SK-N-SH (cell line): ENCODE measurements at regions of chr4 and their contacts with region 1.

Region 1: DNA sequence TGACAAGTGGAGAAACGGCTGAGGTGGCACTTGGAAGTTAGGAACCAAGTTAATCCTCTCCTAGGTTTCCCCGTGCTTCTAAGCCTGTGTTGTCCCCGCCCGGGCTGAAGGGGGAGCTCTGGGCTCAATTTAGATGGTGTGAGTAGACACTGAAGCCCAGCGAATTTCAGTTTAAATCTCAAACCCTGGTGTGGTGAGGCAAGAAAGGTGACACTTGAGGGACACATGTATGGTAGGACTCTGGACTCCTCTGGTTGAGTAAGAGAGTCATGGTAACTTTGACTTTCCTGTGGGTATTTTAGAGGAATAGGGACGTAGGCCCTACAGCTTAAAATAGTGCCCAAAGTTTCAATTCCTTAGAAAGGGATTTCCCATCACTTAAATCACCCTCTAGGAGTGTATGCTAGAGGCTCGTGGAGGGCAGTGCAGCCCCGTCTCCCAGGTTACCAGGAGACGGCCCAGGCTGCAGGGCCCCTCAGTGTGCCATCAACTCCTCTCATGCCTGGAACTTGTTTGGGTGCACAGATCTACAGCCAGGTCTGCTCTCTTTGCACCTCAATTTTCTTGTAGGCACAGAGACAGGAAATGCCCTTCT is 24.0 kb downstream of the HAND2 start:
- DNase-seq: peak; percentile 77
- H3K4me3 ChIP-seq: peak overlapping the region in 1 of 2 experiments; percentile 66; a peak in 2 of 4 replicates
- H3K27ac ChIP-seq: peak overlapping the region; percentile 82 to 99
- H3K4me1 ChIP-seq: peaks cover 8 to 51% of the 10 kb centered on the region in 2 experiments; a peak in 2 of 4 replicates
- H3K27me3 ChIP-seq: no peaks in the 10 kb centered on the region
- CTCF ChIP-seq: peak; percentile 84
- EP300 ChIP-seq: no peak
- RAD21 ChIP-seq: peak; percentile 83

Region 2: GRCh38 chr4:173318648-173319211 is 187.3 kb before region 1 on chr4:
- CTCF ChIA-PET with region 1: interaction called, 13 read pairs
- POLR2A ChIA-PET with region 1: no interaction called
- DNase-seq: peak; percentile 18
- H3K4me3 ChIP-seq: no peak overlapping the region
- H3K27ac ChIP-seq: peak overlapping the region in 1 of 2 experiments; percentile 37; a peak in 3 of 4 replicates
- H3K4me1 ChIP-seq: peaks cover 0 to 21% of the 10 kb centered on the region in 2 experiments; a peak in 3 of 4 replicates
- H3K27me3 ChIP-seq: no peaks in the 10 kb centered on the region
- CTCF ChIP-seq: peak; percentile 50
- EP300 ChIP-seq: no peak
- RAD21 ChIP-seq: peak; percentile 68

Region 3: DNA sequence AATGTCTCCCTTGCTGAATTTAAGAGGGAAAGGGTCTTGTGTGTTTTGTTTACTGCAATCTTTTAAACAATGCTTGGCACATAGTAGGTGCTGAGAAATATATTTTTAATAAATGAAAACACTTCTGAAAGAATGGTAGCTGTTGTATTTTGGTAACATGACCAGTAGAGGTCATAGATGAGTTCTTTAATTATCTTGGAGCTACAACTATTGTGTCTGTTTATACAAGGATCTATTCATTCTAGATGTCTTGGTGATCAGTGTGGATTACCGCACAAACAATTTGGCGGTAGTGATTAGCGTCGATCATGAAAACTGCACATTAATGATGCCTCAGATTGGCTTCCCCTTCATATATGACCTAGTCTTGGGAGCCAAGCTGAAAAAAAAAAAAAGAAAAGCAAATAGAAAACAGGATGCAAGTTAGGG is 85.7 kb before region 1 on chr4:
- CTCF ChIA-PET with region 1: interaction called, 24 read pairs
- POLR2A ChIA-PET with region 1: interaction called, 23 read pairs
- DNase-seq: peak; percentile 34
- H3K4me3 ChIP-seq: no peak overlapping the region
- H3K27ac ChIP-seq: peak overlapping the region in 1 of 2 experiments; percentile 56; a peak in 2 of 4 replicates
- H3K4me1 ChIP-seq: peaks cover 0 to under 1% of the 10 kb centered on the region in 2 experiments; a peak in 1 of 4 replicates
- H3K27me3 ChIP-seq: no peaks in the 10 kb centered on the region
- CTCF ChIP-seq: peak; percentile 69
- EP300 ChIP-seq: no peak
- RAD21 ChIP-seq: peak; percentile 78

Region 4: DNA sequence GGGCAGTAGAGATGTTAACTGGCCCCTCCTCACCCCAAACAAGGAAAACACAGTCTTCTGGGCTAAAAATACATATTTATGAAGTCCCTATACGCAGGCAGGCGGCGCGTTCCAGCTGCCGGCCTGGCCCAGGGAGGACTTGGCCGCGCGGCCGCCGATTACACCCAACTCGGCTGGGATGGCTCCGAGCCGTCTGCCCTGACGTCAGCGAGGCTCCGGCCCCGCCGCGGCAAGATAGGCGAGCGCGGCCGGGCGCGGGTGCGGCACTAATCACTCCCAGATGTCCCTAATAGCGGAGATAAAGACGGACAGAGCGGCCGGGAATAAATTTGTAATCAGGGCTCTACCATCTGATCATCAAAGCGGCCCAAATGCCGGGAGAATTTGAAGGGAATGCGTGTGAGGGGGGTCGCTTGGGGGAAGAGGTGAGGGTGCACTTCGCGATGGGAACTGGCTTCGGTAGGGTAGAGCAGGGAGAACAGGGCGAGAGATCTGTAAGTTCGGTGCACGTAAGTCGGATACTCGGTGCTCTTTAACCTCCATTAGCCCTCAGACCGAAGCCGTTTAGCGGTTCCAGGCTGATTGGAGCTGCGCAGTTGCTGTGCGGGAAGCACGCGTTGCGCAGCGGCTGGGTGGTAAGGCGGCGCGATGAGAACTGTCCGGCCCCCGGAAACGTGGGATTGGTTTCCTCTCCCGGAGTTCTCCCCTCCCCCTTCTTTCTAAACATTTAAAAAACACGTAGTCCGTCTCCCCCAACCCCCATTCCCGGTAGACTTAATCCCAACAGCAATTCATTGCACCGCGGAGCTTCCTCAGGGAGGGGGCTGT is 16.3 kb after region 1 on chr4:
- CTCF ChIA-PET with region 1: interaction called, 6 read pairs
- POLR2A ChIA-PET with region 1: interaction called, 91 read pairs
- DNase-seq: peak; percentile 73
- H3K4me3 ChIP-seq: peak overlapping the region; percentile 61 to 92
- H3K27ac ChIP-seq: peak overlapping the region; percentile 99
- H3K4me1 ChIP-seq: peaks cover 23 to 30% of the 10 kb centered on the region in 2 experiments
- H3K27me3 ChIP-seq: no peaks in the 10 kb centered on the region
- CTCF ChIP-seq: peak; percentile 22
- EP300 ChIP-seq: peak in 1 of 2 experiments; percentile 82; a peak in 2 of 4 replicates
- RAD21 ChIP-seq: no peak

Region 5: GRCh38 chr4:173652283-173652931 is 146.4 kb after region 1 on chr4:
- CTCF ChIA-PET with region 1: no interaction called
- POLR2A ChIA-PET with region 1: no interaction called
- DNase-seq: no peak
- H3K4me3 ChIP-seq: no peak overlapping the region
- H3K27ac ChIP-seq: no peak overlapping the region
- H3K4me1 ChIP-seq: peaks cover 0 to 4% of the 10 kb centered on the region in 2 experiments; a peak in 2 of 4 replicates
- H3K27me3 ChIP-seq: no peaks in the 10 kb centered on the region
- CTCF ChIP-seq: no peak
- EP300 ChIP-seq: no peak
- RAD21 ChIP-seq: no peak

Region 6: DNA sequence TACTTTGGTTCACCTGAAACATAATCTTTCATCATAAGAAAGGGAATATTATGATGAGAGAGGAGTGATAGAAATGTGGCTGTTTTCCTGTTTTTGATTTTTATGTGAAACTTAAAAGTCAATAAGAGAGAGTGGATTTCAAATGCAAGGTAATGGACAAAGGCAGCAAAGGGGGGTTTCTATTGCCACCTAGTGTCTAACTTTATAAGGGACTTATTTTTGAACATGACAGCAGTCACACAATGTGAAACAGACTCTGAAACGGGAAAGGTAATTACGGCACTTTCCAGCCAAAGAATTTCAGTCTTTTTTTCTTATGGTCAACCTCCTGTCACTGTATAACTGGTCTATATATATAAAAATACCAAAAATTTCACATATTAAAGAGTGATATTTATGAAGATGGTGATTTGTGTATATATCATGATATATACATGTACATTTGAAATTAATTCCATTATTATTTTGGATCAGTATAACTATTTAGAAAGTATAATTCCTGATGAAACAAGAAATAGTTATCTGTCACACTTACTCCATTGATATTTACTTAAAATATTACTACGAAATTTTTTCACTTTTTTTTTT is 650.3 kb after region 1 on chr4:
- CTCF ChIA-PET with region 1: interaction called, 8 read pairs
- POLR2A ChIA-PET with region 1: interaction called, 13 read pairs
- DNase-seq: peak; percentile 27
- H3K4me3 ChIP-seq: peak overlapping the region in 1 of 2 experiments; percentile 40; a peak in 1 of 4 replicates
- H3K27ac ChIP-seq: peak overlapping the region; percentile 74 to 100; a peak in 3 of 4 replicates
- H3K4me1 ChIP-seq: peaks cover 40 to 51% of the 10 kb centered on the region in 2 experiments; a peak in 3 of 4 replicates
- H3K27me3 ChIP-seq: no peaks in the 10 kb centered on the region
- CTCF ChIP-seq: peak; percentile 76
- EP300 ChIP-seq: peak in 1 of 2 experiments; percentile 56; a peak in 1 of 4 replicates
- RAD21 ChIP-seq: peak; percentile 94